Left cardiac atrium (tissue), 4 donors: ENCODE measurements at regions of chr18 and their contacts with region 1.

Region 1: GRCh38 chr18:26386002-26386401 is 159.8 kb downstream of the TAF4B start:
- DNase-seq: no peak
- ATAC-seq: peak; percentile 75 to 91

Region 2: GRCh38 chr18:26429535-26430226 is 43.7 kb after region 1 on chr18:
- intact Hi-C with region 1: no loop called
- DNase-seq: no peak
- ATAC-seq: peak; percentile 72 to 96

Region 3: GRCh38 chr18:26648509-26649192 is 262.6 kb after region 1 on chr18:
- intact Hi-C with region 1: loop called (anchors 2 to 10 kb)
- DNase-seq: no peak
- ATAC-seq: no peak